Activated CD4-positive, alpha-beta memory T cell treated with anti-CD3 and anti-CD28 coated beads for 36 hours (primary cell): ENCODE measurements at regions of chr7 and their contacts with region 1.

Region 1: DNA sequence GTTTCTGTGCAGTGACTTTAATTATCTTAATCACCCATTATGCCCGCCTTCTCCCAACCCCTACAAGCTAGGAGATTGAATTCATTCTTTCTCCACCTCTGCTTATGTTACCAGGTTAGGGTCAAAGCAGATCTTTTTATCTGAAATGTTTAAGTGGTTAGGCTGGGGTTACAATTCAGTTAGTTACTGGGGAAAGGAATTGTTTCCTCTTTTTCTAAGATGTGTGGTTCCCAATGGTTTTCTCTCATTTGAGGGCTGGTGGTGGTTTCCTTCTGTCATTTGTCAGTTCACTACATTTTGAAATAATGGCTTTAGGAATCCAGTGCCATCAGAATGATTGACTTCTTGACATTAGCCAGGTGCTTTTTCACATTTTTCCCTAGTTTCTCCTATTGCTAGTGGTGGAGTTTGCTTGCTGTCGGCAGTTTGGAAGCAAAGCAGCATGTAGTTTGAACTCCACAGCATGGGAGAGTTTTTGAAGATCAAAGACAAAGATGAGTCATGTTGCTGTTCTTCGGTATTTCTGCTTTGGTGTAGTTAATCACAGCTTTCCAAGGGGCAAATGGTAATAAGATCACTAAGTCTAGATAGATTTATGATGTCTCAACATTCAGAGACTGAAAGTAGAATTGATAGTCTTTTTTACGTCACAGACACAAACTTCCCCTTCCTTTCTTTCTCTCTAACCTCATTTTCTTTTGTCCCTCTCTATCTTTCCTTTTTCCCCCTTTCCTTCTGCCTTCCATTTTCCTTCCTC is 168.2 kb downstream of the SND1 start:
- DNase-seq: no peak
- H3K4me3 Mint-ChIP-seq: peak overlapping the region; percentile 9
- H3K27ac Mint-ChIP-seq: peak overlapping the region; percentile 56
- H3K4me1 Mint-ChIP-seq: peaks cover 37% of the 10 kb centered on the region
- H3K27me3 Mint-ChIP-seq: no peaks in the 10 kb centered on the region

Region 2: DNA sequence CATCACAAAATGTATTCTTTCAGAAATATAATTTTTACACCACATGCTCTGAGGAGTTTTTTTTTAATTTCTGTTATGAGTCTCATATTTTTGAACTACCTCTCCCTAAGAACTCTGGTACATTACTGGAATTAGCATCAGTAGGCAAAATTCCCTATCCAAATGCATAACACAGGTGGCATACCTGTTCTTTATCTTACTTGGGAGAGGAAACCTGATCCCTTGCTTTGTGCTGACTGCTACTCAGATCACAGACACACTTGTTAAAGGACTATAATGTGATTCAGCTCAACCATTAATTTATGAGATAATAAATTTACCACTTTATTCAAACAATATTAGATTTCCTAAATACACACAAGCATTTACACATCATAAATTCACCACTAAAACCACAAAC is 1184.6 kb before region 1 on chr7:
- CTCF ChIA-PET with region 1: no interaction called
- POLR2A ChIA-PET with region 1: no interaction called
- intact Hi-C with region 1: no loop called
- DNase-seq: no peak
- H3K4me3 Mint-ChIP-seq: no peak overlapping the region
- H3K27ac Mint-ChIP-seq: no peak overlapping the region
- H3K4me1 Mint-ChIP-seq: no peaks in the 10 kb centered on the region
- H3K27me3 Mint-ChIP-seq: no peaks in the 10 kb centered on the region

Region 3: DNA sequence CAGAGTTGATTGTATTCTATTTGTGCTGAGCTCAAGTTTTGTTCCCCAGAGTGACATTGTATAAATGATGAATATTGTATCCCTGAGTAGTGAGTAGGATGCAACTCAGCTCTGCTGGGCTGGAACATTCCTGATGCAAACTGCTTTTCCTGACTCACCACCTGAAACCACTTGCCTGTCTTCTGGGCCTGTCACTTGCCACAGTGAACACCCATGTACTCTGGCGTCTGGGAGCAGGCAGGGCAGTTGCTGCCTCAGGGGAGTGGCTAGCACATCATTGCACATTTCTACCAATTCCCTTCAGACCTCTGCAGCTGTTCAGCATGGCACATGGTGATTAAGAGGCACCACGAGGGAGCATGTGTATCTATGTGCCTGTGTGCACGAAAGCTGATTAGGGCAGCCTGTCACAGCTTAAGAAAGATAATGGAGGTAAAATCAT is 10.9 kb before region 1 on chr7:
- CTCF ChIA-PET with region 1: no interaction called
- POLR2A ChIA-PET with region 1: no interaction called
- intact Hi-C with region 1: loop called (anchors 1 kb)
- DNase-seq: peak; percentile 22
- H3K4me3 Mint-ChIP-seq: no peak overlapping the region
- H3K27ac Mint-ChIP-seq: no peak overlapping the region
- H3K4me1 Mint-ChIP-seq: peaks cover 38% of the 10 kb centered on the region
- H3K27me3 Mint-ChIP-seq: no peaks in the 10 kb centered on the region

Region 4: GRCh38 chr7:127858091-127858914 is 38.1 kb after region 1 on chr7:
- CTCF ChIA-PET with region 1: no interaction called
- POLR2A ChIA-PET with region 1: no interaction called
- intact Hi-C with region 1: loop called (anchors 1 kb)
- DNase-seq: no peak
- H3K4me3 Mint-ChIP-seq: no peak overlapping the region
- H3K27ac Mint-ChIP-seq: peak overlapping the region; percentile 23
- H3K4me1 Mint-ChIP-seq: peaks cover 60% of the 10 kb centered on the region
- H3K27me3 Mint-ChIP-seq: no peaks in the 10 kb centered on the region

Region 5: DNA sequence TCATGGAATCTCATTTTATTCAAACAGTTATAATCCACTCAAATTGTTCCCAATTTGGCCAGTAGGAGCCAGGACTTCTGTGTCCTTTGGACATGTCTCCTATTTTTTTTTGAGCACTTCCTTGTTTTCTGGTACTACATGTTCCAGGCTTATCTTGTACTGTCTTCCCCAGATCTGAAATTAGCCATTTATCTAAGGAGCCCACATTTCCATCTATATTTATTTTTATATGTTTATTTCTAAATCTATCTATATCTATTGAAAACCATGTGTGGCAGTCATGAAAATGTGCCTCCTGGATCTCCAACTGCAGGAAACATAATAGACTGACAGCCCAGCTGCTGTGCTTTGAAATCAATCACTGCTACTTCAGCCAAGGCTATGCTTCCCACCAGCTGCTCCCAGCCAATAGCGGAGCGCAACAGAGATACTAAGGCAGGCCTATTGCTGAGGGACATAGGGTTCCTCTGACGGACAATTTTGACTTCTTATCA is 64.0 kb after region 1 on chr7:
- CTCF ChIA-PET with region 1: no interaction called
- POLR2A ChIA-PET with region 1: no interaction called
- intact Hi-C with region 1: no loop called
- DNase-seq: no peak
- H3K4me3 Mint-ChIP-seq: no peak overlapping the region
- H3K27ac Mint-ChIP-seq: no peak overlapping the region
- H3K4me1 Mint-ChIP-seq: peaks cover 20% of the 10 kb centered on the region
- H3K27me3 Mint-ChIP-seq: no peaks in the 10 kb centered on the region